ENCODE measurements at regions of chr5 and their contacts with region 1.

Region 1: GRCh38 chr5:155728146-155728856 is 598.7 kb upstream of the SGCD start:
- DNase-seq: no peak
- H3K4me3 Mint-ChIP-seq: no peak overlapping the region
- H3K27ac Mint-ChIP-seq: no peak overlapping the region
- H3K4me1 Mint-ChIP-seq: no peaks in the 10 kb centered on the region
- H3K27me3 Mint-ChIP-seq: peaks cover 44% of the 10 kb centered on the region

Region 2: GRCh38 chr5:154478224-154478565 is 1250.1 kb before region 1 on chr5 and contains the start of gene HAND1:
- intact Hi-C with region 1: loop called (anchors 5 kb)
- DNase-seq: no peak
- H3K4me3 Mint-ChIP-seq: no peak within 1 kb of the TSS
- H3K27ac Mint-ChIP-seq: no peak within 1 kb of the TSS
- H3K4me1 Mint-ChIP-seq: peaks cover 12% of the 10 kb centered on the region
- H3K27me3 Mint-ChIP-seq: peaks cover 82% of the 10 kb centered on the region
- total RNA-seq, gene HAND1: not detected in 2 replicates

Region 3: DNA sequence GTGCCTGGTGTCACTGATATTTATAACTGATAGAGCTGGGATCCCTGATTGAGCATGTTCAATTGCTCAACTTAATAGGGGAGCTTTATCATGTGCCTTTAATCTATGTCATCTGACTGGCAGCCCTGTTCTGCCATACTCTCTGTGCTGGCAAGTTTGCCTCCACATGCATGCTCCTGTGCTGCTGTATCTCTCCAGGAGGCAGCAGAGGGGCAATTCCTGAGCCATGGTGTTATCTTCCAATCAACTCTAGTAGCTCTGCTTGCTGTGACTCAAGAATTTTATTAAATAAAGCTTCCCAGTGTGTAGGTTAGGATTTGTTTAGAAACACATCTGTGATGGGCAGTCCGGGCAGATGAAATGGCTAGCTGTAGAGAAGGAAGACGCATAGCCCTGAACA is 72.7 kb before region 1 on chr5:
- intact Hi-C with region 1: no loop called
- DNase-seq: no peak
- H3K4me3 Mint-ChIP-seq: no peak overlapping the region
- H3K27ac Mint-ChIP-seq: no peak overlapping the region
- H3K4me1 Mint-ChIP-seq: no peaks in the 10 kb centered on the region
- H3K27me3 Mint-ChIP-seq: no peaks in the 10 kb centered on the region

Measured in activated T-helper 2 cell treated with anti-CD3 and anti-CD28 coated beads, Interferon-gamma antibody, Interleukin-2, Interleukin-4, amounts not matched to agents 10 μg/mL and 5 μg/mL and 100 μg/mL, durations not matched to agents 14 hours and 24 hours and 36 hours (primary cell).